Ascending aorta (tissue), 2 donors: ENCODE measurements at regions of chr4 and their contacts with region 1.

Region 1: GRCh38 chr4:10554694-10555093 is 97.5 kb upstream of the ZNF518B start:
- DNase-seq: no peak
- H3K4me3 ChIP-seq: no peak overlapping the region
- H3K27ac ChIP-seq: no peak overlapping the region
- H3K4me1 ChIP-seq: no peaks in the 10 kb centered on the region
- H3K27me3 ChIP-seq: no peaks in the 10 kb centered on the region
- CTCF ChIP-seq: peak in 2 of 3 experiments; percentile 61 to 64

Region 2: GRCh38 chr4:8560267-8561047 is 1994.2 kb before region 1 on chr4:
- intact Hi-C with region 1: no loop called
- DNase-seq: no peak
- H3K4me3 ChIP-seq: no peak overlapping the region
- H3K27ac ChIP-seq: no peak overlapping the region
- H3K4me1 ChIP-seq: no peaks in the 10 kb centered on the region
- H3K27me3 ChIP-seq: no peaks in the 10 kb centered on the region
- CTCF ChIP-seq: no peak

Region 3: DNA sequence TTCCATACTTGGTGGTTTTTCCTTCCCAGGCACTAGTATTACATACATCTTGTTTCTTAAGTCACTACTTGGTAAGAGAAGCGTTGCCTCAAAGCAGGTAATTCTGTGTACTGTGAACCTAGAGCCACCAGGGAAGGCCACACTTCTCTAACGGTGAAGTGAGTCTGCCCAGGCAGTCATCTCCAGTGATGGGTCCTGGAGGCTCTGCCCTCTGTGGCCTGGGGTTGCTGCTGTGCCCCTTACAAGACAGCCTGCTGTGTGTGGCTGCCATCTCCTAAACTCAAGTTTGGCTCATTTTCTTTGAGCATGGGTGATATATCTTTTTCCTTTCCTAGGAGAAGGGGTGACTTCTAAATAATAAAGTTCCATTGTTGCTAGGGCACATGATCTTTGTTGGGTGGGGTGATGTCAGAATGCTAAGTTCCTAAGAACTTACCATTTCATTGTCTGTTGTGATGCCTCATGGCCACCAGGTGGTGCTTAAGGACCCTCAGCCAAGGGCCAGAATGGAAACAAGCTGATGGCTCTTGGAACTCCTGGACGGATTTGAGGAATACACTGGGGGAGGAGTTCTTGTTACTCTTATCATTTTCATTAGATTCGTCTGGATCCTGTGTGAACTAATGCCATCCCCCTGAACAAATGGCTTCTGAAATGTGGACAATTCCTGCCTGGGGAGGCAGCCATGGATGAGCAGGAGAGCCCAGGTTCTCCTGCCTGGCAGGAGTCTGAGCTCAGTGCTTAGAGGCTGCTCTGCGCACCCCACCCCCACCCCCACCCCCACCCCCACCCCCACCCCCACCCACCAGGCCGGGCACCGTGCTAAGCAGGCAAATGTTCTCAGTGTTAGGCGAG is 397.0 kb before region 1 on chr4:
- intact Hi-C with region 1: loop called (anchors 5 kb)
- DNase-seq: peak in 1 of 2 donors; percentile 66
- H3K4me3 ChIP-seq: no peak overlapping the region
- H3K27ac ChIP-seq: no peak overlapping the region
- H3K4me1 ChIP-seq: no peaks in the 10 kb centered on the region
- H3K27me3 ChIP-seq: no peaks in the 10 kb centered on the region
- CTCF ChIP-seq: peak; percentile 61 to 79 (median 63)

Region 4: DNA sequence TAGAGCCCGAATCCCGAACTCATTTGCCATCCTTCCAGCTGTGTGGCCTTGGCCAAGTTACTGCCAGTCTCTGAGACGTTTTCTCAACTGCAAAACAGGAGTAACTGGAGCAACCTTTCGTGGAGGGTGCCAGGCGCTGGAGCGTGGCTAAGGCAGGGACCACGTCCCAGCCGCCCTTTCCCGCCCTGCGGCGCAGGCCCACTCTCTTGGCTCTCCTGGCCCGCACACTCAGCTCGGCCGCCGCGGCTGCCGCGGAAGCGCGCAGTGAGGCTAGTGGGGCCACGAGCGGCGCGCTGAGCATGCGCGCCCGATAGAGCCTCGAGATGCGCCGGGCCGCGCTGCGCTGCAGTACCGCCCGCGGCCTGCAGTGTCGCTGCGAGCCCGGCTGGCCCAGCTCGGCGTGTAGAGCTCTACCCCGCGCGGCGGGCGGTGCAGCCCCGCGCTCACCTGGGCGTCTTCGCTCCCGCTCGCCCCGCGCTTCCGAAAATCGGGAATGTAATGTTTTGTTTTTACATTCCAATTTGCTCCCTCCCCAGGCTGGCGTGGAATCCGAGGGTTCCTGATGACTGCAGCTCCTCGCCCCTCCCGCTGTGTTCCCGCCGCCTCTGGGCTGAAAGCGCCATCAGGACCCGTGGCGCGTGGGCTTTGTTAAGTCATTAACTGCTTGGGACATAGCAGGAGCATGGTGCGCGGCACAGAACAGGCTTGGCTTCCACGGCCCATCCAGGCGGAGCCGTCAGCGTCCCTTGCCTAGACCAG is 93.4 kb before region 1 on chr4:
- intact Hi-C with region 1: loop called (anchors 5 kb)
- DNase-seq: peak in 1 of 2 donors; percentile 73
- H3K4me3 ChIP-seq: peak overlapping the region; percentile 44 to 53
- H3K27ac ChIP-seq: no peak overlapping the region
- H3K4me1 ChIP-seq: peaks cover 0 to 3% of the 10 kb centered on the region in 2 donors
- H3K27me3 ChIP-seq: no peaks in the 10 kb centered on the region
- CTCF ChIP-seq: peak; percentile 71 to 93 (median 92)